ENCODE measurements at regions of chr2 and their contacts with region 1.

Region 1: DNA sequence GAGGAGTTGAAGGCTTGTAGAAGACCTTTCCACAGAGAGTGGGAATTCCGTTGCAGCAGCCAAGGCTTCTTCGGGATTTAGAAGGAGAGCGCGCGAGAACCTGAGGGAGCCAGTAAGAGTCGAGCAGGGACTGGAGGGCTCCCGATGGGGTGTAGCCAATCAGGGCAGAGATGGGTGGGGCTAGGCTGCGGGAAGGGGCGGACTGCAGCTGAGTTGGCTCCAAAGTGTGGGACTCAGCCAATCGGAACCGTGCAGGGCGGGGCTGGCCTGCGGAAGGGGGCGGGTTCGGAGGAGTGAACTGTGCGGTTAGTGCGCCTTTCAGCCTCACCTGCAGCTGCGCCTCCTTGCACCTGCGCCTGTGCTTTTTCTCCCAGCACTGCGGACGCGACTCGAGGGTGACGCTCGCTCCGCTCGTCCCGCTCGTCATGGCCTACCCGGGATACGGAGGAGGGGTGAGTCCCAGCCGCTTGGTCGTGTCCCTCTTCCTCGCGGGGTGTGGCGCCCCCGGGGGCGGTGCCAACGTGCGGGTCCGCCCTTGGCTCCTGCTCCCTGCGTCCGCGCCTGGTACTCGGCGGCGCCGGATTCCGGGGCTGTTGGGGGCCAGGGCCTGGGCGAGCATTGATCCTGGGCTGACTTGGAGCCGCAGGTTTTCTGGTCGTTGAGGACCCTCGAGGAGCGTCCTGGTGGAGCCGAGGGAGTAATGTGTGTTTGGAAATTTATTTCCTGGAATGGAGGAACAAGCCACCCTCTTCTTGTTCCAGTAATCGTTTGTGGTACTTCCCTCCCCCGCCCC is at the start of gene GCA:
- DNase-seq: peak; percentile 99
- ATAC-seq: peak; percentile 99
- H3K4me3 Mint-ChIP-seq: peak within 1 kb of the TSS; percentile 89
- H3K27ac Mint-ChIP-seq: peak within 1 kb of the TSS; percentile 81
- H3K4me1 Mint-ChIP-seq: peaks cover 16% of the 10 kb centered on the region
- H3K27me3 Mint-ChIP-seq: peaks cover 8% of the 10 kb centered on the region
- total RNA-seq, gene GCA: 13.1 to 13.7 TPM

Region 2: DNA sequence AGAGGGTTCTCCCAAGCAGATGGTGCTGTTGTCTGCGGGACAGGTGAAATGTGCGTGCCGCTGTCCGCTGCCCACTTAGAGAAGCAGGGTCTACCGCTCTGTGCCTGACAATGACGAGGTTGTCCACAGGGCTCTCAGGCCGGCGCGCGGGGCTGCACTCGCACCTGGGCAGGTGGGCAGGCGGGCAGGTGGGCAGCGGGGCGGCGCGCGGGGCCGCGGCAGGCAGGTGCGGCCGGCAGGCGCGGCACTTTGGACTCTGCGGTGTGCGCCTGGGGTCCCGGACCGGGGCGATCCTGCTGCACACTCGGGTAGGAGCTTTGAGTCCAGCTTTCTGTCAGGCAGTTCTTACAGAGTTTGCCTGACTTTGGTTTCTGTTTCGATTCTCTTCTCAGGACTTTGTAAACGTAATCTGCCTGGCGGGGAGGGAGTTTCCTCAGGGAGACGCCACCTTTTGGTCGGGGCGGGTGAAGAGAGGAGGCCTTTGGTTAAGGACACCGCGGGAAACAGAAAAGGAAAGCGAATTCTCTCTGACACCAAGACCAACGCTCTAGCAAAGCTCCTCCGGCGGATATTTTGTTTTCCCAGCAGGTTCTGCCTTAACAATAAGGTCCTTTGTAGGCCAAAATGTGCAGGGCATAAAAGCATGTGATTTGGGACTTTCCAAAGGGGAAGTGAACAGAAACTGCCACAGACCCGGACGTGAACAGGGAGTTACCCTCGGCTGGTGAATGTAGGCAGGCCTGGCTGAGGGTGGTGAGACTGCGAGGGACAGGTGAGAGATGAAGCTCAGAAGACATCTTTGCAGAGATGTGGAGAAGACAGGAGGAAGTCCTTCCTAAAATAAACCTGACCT is 25.5 kb before region 1 on chr2 and contains the start of gene IFIH1:
- CTCF ChIA-PET with region 1: interaction called, 11 read pairs
- POLR2A ChIA-PET with region 1: interaction called, 12 read pairs
- DNase-seq: peak; percentile 82
- ATAC-seq: peak; percentile 87
- H3K4me3 Mint-ChIP-seq: peak within 1 kb of the TSS; percentile 95
- H3K27ac Mint-ChIP-seq: peak within 1 kb of the TSS; percentile 99
- H3K4me1 Mint-ChIP-seq: peaks cover 61% of the 10 kb centered on the region
- H3K27me3 Mint-ChIP-seq: no peaks in the 10 kb centered on the region
- total RNA-seq, gene IFIH1: 37.3 to 37.6 TPM